Esophagus squamous epithelium (tissue), 5 donors: ENCODE measurements at regions of chr3 and their contacts with region 1.

Region 1: GRCh38 chr3:193788189-193788991 is 195.4 kb downstream of the OPA1 start:
- DNase-seq: no peak
- H3K4me3 ChIP-seq: no peak overlapping the region
- H3K27ac ChIP-seq: peak overlapping the region in 2 of 4 donors; percentile 40 to 56
- H3K4me1 ChIP-seq: peaks cover 4 to 50% (median 7%) of the 10 kb centered on the region in 3 donors
- H3K27me3 ChIP-seq: peaks cover 0 to 8% (median 0%) of the 10 kb centered on the region in 4 donors
- CTCF ChIP-seq: peak; percentile 20 to 66 (median 59)
- POLR2A ChIP-seq: no peak

Region 2: GRCh38 chr3:193483988-193484539 is 304.3 kb before region 1 on chr3:
- intact Hi-C with region 1: no loop called
- DNase-seq: no peak
- H3K4me3 ChIP-seq: no peak overlapping the region
- H3K27ac ChIP-seq: no peak overlapping the region
- H3K4me1 ChIP-seq: no peaks in the 10 kb centered on the region
- H3K27me3 ChIP-seq: no peaks in the 10 kb centered on the region
- CTCF ChIP-seq: no peak
- POLR2A ChIP-seq: no peak

Region 3: GRCh38 chr3:193872265-193872753 is 83.9 kb after region 1 on chr3:
- intact Hi-C with region 1: loop called (anchors 10 kb)
- DNase-seq: no peak
- H3K4me3 ChIP-seq: no peak overlapping the region
- H3K27ac ChIP-seq: peak overlapping the region; percentile 75 to 86 (median 81)
- H3K4me1 ChIP-seq: peaks cover 41 to 81% (median 41%) of the 10 kb centered on the region in 3 donors
- H3K27me3 ChIP-seq: peaks cover 0 to 24% (median 0%) of the 10 kb centered on the region in 4 donors
- CTCF ChIP-seq: peak in 1 of 6 experiments; percentile 5
- POLR2A ChIP-seq: no peak

Region 4: GRCh38 chr3:194134757-194135528 is 346.6 kb after region 1 on chr3:
- intact Hi-C with region 1: loop called (anchors 10 kb)
- DNase-seq: peak; percentile 59
- H3K4me3 ChIP-seq: peak overlapping the region; percentile 53 to 88 (median 70)
- H3K27ac ChIP-seq: peak overlapping the region; percentile 93 to 98 (median 96)
- H3K4me1 ChIP-seq: peaks cover 22 to 96% (median 46%) of the 10 kb centered on the region in 3 donors
- H3K27me3 ChIP-seq: peaks cover 0 to 4% (median 0%) of the 10 kb centered on the region in 4 donors
- CTCF ChIP-seq: peak in 1 of 6 experiments; percentile 16
- POLR2A ChIP-seq: peak in 3 of 4 donors; percentile 45 to 66 (median 47)